K562 (cell line): ENCODE measurements at regions of chr4 and their contacts with region 1.

Region 1: DNA sequence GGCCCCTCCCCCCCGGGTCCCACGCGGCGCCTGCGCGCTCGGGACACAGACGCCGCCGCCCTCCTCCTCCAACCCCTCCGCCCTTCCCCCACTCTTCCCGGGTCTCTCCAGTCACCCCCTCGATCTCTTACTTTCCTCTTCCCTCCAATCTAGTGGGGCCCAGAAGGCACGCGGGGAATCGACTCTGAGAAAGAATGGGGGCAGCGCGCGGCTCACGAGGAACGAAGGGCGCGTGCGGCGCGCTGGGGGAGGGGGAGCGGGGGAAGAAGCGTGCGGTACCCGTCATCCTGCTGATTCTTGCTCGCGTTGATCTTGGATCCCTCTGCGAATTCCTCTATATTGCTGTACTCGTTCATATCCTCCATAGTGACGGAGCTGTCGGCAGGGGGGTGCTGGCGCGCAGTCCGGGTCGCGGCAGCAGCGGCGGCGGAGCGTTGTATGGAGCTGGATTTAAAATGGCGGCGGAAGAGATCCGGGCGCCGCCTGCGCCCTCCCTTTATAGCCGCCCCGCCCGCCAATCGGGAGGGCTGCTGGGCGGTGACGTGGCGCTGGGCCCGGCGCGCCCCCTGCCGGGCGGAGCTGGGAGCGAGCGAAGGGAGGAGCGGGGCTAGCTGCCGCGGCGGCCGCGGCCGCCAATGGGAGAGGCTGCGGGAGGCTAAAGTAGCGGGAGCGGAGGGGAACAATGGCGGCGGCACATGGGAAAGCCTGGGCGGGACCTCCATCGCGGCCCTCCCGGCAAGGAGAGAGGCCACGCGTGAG is 1.1 kb downstream of the HNRNPDL start:
- DNase-seq: peak; percentile 83 to 96 (median 90)
- ATAC-seq: peak; percentile 75
- H3K4me3 ChIP-seq: peak overlapping the region; percentile 80
- H3K27ac ChIP-seq: peak overlapping the region; percentile 99
- H3K4me1 ChIP-seq: peaks cover 19 to 26% of the 10 kb centered on the region in 2 experiments; a peak in 4 of 5 replicates
- H3K27me3 ChIP-seq: no peaks in the 10 kb centered on the region
- CTCF ChIP-seq: peak; percentile 81 to 95 (median 89)
- EP300 ChIP-seq: peak; percentile 52
- POLR2A ChIP-seq: peak; percentile 98
- RAD21 ChIP-seq: peak; percentile 31 to 34; a peak in 2 of 4 replicates

Region 2: DNA sequence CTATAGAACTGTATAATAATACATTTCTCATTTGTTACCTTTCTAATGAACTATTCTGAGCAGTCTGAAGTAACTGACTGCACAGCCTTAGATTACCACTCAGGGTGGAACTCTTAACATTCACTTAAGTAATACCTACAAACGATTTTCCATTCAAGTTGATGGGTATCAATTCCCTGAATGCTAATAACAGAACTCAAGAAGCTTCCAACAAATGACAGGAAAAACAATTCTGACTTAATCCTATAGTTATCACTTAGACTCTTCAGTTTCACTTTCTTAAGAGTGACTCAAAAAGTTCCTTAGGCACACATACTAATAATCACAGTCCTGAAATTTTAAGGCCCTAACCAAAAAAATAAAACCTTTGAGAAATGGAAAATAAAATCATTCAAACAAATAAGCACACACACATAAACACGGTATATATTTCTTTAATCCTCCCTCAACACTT is 76.2 kb before region 1 on chr4:
- CTCF ChIA-PET with region 1: no interaction called
- POLR2A ChIA-PET with region 1: interaction called, 10 read pairs
- in situ Hi-C with region 1: no loop called
- intact Hi-C with region 1: no loop called
- DNase-seq: no peak
- ATAC-seq: peak; percentile 25
- H3K4me3 ChIP-seq: no peak overlapping the region
- H3K27ac ChIP-seq: no peak overlapping the region
- H3K4me1 ChIP-seq: no peaks in the 10 kb centered on the region
- H3K27me3 ChIP-seq: no peaks in the 10 kb centered on the region
- CTCF ChIP-seq: no peak
- EP300 ChIP-seq: no peak
- POLR2A ChIP-seq: peak; percentile 34
- RAD21 ChIP-seq: no peak

Region 3: GRCh38 chr4:82373816-82374625 is 55.1 kb before region 1 on chr4 and contains the start of gene HNRNPD:
- CTCF ChIA-PET with region 1: interaction called, 7 read pairs
- POLR2A ChIA-PET with region 1: interaction called, 19 read pairs
- in situ Hi-C with region 1: loop called (anchors 5 kb)
- intact Hi-C with region 1: loop called (anchors 1 kb)
- DNase-seq: peak; percentile 88 to 99 (median 92)
- ATAC-seq: peak; percentile 85
- H3K4me3 ChIP-seq: peak within 1 kb of the TSS; percentile 94
- H3K27ac ChIP-seq: peak within 1 kb of the TSS; percentile 100
- H3K4me1 ChIP-seq: peaks cover 8 to 9% of the 10 kb centered on the region in 2 experiments; a peak in 4 of 5 replicates
- H3K27me3 ChIP-seq: no peaks in the 10 kb centered on the region
- CTCF ChIP-seq: no peak
- EP300 ChIP-seq: no peak; the same call in 1 of the 2 replicates
- POLR2A ChIP-seq: peak; percentile 88
- RAD21 ChIP-seq: no peak; a peak in 1 of 4 replicates
- polyA plus RNA-seq, gene HNRNPD: 152 to 187 TPM

Region 4: DNA sequence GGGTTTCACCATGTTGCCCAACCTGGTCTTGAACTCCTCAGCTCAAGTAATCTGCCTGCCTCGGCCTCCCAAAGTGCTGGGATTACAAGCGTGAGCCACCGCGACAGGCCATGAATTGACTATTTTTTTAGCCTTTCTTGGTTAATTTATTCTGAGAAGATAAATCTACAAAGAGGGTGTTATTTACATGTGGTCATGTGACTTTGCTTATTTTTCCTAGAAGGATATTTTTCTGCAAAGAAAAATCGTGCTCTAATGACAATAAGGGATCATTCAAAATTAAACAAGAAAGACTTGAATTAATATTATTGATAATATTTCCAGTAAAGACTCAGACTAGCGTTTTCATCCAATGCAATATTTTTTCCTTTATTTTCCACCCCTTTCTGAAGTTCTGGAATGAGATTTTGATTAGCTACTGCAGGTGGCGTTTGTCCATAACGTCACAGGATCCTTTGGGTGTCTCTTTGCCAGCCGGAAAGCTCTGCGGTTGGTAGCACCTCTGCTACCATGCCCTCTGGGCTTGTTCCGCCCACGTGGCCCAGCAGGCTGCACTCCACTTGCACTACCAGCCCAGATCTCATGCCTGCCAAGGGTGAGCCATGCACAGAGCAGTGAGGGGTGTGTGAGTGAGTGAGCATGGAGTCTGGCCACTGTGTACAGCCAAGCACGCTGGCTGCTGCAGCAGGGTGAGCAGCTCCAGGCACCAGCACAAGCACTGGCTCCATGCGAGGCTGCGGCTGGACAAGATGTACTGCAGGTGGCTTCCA is 49.0 kb before region 1 on chr4:
- CTCF ChIA-PET with region 1: interaction called, 7 read pairs
- POLR2A ChIA-PET with region 1: interaction called, 7 read pairs
- in situ Hi-C with region 1: loop called (anchors 5 kb)
- intact Hi-C with region 1: no loop called
- DNase-seq: no peak
- ATAC-seq: peak; percentile 23; the same call in 2 of the 3 replicates
- H3K4me3 ChIP-seq: no peak overlapping the region
- H3K27ac ChIP-seq: no peak overlapping the region
- H3K4me1 ChIP-seq: peaks cover 7 to 8% of the 10 kb centered on the region in 2 experiments; a peak in 4 of 5 replicates
- H3K27me3 ChIP-seq: no peaks in the 10 kb centered on the region
- CTCF ChIP-seq: no peak
- EP300 ChIP-seq: no peak
- POLR2A ChIP-seq: no peak
- RAD21 ChIP-seq: no peak

Region 5: DNA sequence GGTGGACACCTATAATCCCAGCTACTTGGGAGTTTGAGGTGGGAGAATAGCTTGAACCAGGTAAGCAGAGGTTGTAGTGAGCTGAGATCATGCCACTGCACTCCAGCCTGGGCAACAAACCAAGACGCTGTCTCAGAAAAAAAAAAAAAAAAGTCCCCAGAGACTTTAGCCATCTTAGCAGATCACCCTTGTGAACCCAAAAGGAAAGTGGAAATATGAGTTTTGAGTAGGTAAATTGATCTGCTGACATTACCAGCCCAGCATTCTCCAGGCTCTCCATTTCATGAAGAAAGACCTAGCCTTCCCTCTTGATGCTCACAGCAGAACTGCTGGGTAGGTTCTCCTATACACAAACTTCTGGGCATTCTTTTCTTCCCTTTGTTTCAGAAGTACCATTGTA is 30.9 kb before region 1 on chr4:
- CTCF ChIA-PET with region 1: no interaction called
- POLR2A ChIA-PET with region 1: interaction called, 10 read pairs
- in situ Hi-C with region 1: no loop called
- intact Hi-C with region 1: no loop called
- DNase-seq: no peak
- ATAC-seq: no peak
- H3K4me3 ChIP-seq: no peak overlapping the region
- H3K27ac ChIP-seq: no peak overlapping the region
- H3K4me1 ChIP-seq: no peaks in the 10 kb centered on the region; a peak in 1 of 5 replicates
- H3K27me3 ChIP-seq: no peaks in the 10 kb centered on the region; a peak in 1 of 5 replicates
- CTCF ChIP-seq: no peak
- EP300 ChIP-seq: no peak
- POLR2A ChIP-seq: no peak
- RAD21 ChIP-seq: no peak

Region 6: DNA sequence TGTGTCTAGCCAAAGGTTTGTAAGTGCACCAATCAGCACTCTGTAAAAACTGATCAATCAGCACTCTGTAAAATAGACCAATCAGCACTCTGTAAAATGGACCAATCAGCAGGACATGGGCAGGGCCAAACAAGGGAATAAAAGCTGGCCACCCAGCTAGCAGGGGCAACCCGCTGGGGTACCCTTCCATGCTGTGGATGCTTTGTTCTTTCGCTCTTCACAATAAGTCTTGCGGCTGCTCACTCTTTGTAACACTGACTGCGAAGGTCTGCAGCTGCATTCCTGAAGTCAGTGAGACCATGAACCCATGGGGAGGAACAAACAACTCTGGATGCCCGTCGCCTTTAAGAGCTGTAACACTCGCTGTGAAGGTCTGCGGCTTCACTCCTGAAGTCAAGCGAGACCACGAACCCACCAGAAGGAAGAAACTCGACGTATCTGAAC is 13.2 kb before region 1 on chr4:
- CTCF ChIA-PET with region 1: no interaction called
- POLR2A ChIA-PET with region 1: interaction called, 17 read pairs
- in situ Hi-C with region 1: no loop called
- intact Hi-C with region 1: no loop called
- DNase-seq: no peak
- ATAC-seq: no peak; the same call in 2 of the 3 replicates
- H3K4me3 ChIP-seq: no peak overlapping the region
- H3K27ac ChIP-seq: no peak overlapping the region
- H3K4me1 ChIP-seq: peaks cover 0 to 7% of the 10 kb centered on the region in 2 experiments; a peak in 3 of 5 replicates
- H3K27me3 ChIP-seq: no peaks in the 10 kb centered on the region
- CTCF ChIP-seq: no peak
- EP300 ChIP-seq: no peak
- POLR2A ChIP-seq: no peak
- RAD21 ChIP-seq: no peak

Region 7: DNA sequence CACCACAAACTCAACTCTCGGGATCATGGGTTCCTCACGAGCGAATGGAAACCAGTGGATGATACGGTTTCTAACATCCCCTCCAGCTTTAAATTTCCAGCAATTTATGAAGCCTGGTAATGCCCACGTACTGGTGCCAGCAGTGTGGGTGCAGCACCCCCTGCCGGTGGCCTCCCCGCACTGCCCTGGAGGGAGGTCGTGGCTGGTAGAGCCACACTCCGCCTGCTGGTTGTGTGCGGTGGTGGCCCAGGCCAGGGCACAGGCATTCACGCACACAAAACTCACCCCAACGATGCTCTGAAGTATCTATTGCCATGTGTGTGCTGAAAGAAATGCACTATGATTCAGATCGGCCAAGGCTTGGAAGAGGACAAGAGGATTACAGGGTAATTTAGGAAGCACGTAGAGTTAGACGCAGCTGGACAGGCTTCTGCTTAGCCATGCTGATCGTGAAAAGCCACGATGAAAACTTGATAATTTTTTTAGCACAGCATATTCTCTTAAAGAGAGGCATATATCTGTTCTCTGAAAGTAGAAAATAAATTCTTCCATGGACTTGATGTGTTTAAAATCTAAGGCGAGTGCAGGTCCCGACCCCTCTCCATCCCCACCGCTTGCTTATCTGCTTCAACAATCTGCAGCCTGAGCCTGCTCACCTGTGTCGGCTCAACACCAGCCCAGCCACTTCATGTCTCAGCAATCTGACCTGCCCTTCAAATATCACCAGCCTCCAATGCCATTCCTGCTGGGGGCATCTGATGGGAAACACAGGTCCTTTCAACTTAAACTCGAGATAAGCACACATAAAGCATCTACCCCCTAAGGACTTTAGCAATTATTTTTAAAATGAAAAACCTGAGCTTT is 310.4 kb after region 1 on chr4:
- CTCF ChIA-PET with region 1: no interaction called
- POLR2A ChIA-PET with region 1: no interaction called
- in situ Hi-C with region 1: no loop called
- intact Hi-C with region 1: no loop called
- DNase-seq: peak; percentile 71 to 89 (median 86)
- ATAC-seq: peak; percentile 100
- H3K4me3 ChIP-seq: no peak overlapping the region
- H3K27ac ChIP-seq: no peak overlapping the region
- H3K4me1 ChIP-seq: 0 out of 5 replicates have a peak, but pooled peaks cover 0 to 2% of the 10 kb centered on the region in 2 experiments
- H3K27me3 ChIP-seq: peaks cover 4 to 26% of the 10 kb centered on the region in 2 experiments; a peak in 4 of 5 replicates
- CTCF ChIP-seq: peak; percentile 98 to 100 (median 99)
- EP300 ChIP-seq: no peak
- POLR2A ChIP-seq: no peak
- RAD21 ChIP-seq: peak; percentile 75 to 83